Left cardiac atrium (tissue), 4 donors: ENCODE measurements at regions of chr6 and their contacts with region 1.

Region 1: GRCh38 chr6:99151634-99152344 is 197.7 kb downstream of the FAXC start:
- DNase-seq: peak; percentile 23
- ATAC-seq: peak; percentile 44 to 67

Region 2: GRCh38 chr6:99064834-99065233 is 87.0 kb before region 1 on chr6:
- intact Hi-C with region 1: no loop called
- DNase-seq: no peak
- ATAC-seq: no peak

Region 3: GRCh38 chr6:99232056-99232455 is 80.3 kb after region 1 on chr6:
- intact Hi-C with region 1: loop called in 1 of 2 experiments (anchors 10 kb)
- DNase-seq: no peak
- ATAC-seq: no peak

Region 4: GRCh38 chr6:99241905-99242534 is 90.2 kb after region 1 on chr6:
- intact Hi-C with region 1: loop called (anchors 2 to 10 kb)
- DNase-seq: no peak
- ATAC-seq: no peak